Activated naive CD4-positive, alpha-beta T cell treated with anti-CD3 and anti-CD28 coated beads, Interleukin-2, amount 10 ng/mL, durations not matched to agents 7 days and 5 days (primary cell): ENCODE measurements at regions of chr12 and their contacts with region 1.

Region 1: DNA sequence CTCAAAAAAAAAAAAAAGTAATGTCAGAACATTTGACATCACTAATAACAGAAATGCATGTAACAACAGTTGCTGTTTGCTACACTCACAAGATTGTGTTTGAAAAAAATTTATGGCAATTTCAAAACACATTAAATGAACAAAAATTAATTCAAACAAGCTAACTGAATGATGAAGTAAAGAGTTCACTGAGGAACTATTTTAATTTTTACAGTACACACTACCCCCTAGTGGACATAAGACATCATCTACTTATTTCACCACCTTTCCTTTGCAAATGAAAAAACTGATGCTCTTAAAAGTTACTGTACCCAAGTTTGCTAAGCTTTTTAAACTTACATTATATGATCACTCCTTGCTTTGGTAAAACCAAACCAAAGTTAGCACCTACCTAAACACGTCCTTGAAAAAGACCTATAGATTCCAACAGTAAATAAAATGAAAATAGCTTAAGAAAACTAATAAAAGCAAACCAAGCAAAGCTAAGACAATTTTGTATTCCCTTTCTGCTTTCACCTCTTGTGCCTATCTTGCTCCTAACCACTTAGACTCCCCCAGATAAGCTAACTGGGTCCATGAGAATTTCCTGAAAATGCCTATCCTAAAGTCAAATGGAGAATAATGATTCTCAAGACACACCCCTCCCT is 22.2 kb downstream of the UBE2N start:
- DNase-seq: no peak
- H3K4me3 Mint-ChIP-seq: no peak overlapping the region
- H3K27ac Mint-ChIP-seq: no peak overlapping the region
- H3K4me1 Mint-ChIP-seq: peaks cover 69% of the 10 kb centered on the region
- H3K27me3 Mint-ChIP-seq: no peaks in the 10 kb centered on the region

Region 2: DNA sequence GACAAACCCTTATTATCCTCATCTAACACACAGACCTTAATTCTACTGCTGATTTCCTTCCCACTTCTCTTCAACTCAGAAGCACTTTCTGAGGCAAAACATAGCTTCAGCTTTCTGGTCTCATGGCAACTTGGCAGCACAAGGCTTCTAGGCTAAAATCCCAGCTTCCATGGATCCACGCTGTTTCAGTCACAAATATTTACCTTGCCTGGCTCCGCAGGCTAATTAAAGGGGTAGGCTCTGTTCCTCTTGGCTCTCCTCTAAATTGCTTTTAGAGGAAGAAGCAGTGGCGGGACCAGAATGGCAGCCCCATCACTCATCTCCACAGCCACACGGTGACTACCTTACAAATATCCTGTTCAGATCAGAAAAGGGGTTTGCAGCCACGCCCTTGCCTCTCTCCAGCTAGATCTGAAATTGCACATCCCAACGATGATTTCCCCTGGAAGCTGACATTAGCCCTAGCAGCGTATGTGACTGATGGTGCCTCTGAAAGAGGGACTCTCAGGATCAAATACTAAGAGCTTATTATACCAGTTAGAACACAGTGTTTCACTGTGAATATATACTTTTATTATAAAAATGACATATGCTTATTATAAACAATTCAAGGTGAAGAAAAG is 263.3 kb before region 1 on chr12:
- CTCF ChIA-PET with region 1: no interaction called
- DNase-seq: no peak
- H3K4me3 Mint-ChIP-seq: no peak overlapping the region
- H3K27ac Mint-ChIP-seq: no peak overlapping the region
- H3K4me1 Mint-ChIP-seq: no peaks in the 10 kb centered on the region
- H3K27me3 Mint-ChIP-seq: peaks cover 16% of the 10 kb centered on the region

Region 3: DNA sequence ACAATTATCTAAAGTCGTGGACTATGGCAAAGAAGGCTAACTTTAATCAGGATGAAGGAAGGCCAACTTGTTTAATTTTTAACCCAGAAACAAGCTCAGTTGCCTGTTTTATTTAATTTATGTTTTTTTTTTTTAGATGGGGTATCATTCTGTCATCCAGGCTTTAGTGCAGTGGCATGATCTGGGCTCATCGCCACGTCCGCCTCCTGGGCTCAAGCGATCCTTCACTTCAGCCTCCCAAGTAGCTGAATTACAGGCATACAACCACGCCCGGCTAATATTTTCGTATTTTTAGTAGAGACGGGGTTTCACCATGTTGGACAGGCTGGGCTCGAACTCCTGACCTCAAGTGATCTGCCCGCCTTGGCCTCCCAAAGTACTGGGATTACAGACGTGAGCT is 22.1 kb before region 1 on chr12:
- CTCF ChIA-PET with region 1: interaction called, 21 read pairs
- DNase-seq: no peak
- H3K4me3 Mint-ChIP-seq: no peak overlapping the region
- H3K27ac Mint-ChIP-seq: no peak overlapping the region
- H3K4me1 Mint-ChIP-seq: no peaks in the 10 kb centered on the region
- H3K27me3 Mint-ChIP-seq: no peaks in the 10 kb centered on the region

Region 4: GRCh38 chr12:93438266-93439050 is 18.9 kb after region 1 on chr12:
- CTCF ChIA-PET with region 1: interaction called, 14 read pairs
- DNase-seq: no peak
- H3K4me3 Mint-ChIP-seq: no peak overlapping the region
- H3K27ac Mint-ChIP-seq: no peak overlapping the region
- H3K4me1 Mint-ChIP-seq: peaks cover 73% of the 10 kb centered on the region
- H3K27me3 Mint-ChIP-seq: no peaks in the 10 kb centered on the region